GM12878 (cell line): ENCODE measurements at regions of chr9 and their contacts with region 1.

Region 1: DNA sequence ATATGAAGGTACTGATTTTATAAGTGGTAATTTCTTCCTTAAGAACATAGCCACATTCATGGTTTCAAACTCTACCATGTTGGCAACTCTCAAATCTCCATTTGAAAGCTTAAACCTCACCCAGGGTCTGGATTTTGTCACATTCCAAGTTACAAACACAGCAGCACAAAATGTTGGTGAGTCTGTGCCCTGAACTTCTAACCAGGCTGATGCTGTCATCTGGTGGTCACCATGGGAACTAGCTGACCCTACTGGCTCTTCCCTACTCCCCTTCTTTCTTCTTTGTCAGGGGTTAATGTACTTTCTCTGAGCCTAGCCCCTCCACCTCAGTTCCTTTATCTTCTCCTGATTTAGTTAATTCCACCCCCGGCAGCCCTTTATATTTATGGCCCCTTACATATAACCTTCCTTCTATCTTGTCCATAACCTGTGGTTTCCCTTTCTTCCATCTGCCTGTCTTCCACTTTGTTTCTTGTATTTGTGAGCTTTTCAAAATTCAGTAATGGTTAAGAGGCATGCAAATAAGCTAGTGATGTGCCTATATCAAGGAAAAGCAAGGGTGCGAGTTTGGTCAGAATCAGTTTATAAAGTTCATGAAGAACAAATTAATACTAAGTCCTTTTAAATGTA is 35.9 kb downstream of the TGFBR1 start:
- DNase-seq: no peak
- ATAC-seq: peak; percentile 91
- H3K4me3 ChIP-seq: no peak overlapping the region
- H3K27ac ChIP-seq: no peak overlapping the region
- H3K4me1 ChIP-seq: peaks cover 5% of the 10 kb centered on the region
- H3K27me3 ChIP-seq: no peaks in the 10 kb centered on the region
- CTCF ChIP-seq: peak; percentile 97 to 98 (median 97)
- EP300 ChIP-seq: no peak
- POLR2A ChIP-seq: no peak
- RAD21 ChIP-seq: peak; percentile 98

Region 2: DNA sequence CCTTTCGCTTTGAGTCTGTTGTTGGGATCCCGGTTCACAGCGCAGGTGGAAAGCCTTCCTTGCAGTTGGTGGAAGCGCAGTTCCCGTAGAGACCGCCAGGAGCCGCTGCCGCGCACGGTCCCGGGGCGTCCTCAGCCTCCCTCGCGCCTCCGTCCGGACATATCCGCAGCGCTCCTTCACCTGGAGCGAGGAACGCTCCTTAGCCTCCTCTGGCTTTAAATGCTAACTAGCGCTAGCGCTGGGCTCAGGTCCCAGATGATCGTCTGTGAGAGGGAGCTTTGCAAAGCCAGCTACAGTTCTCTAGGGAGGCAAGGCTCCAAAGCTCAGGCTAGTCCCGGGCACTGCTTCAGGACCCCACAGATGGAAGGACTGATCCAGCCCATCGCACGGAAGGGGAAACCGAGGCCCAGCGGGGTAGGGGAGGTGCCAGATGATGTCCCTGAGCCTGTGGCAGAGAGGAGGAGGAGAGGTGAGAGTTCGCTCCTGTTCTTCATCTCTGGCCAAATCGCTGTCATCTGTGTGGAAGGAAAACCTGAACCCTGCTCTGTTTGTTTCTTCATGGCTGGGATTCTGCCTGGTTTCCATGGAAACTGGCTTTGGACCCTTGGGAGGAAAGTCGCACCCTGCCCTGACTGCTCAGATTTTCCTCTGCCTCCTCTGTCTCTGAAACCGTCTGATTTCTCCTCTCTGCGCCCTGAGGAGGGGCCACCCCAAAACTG is 165.6 kb before region 1 on chr9:
- CTCF ChIA-PET with region 1: interaction called, 123 read pairs
- POLR2A ChIA-PET with region 1: no interaction called
- RAD21 ChIA-PET with region 1: interaction called, 4 read pairs
- SMC1A ChIA-PET with region 1: interaction called, 15 read pairs
- in situ Hi-C with region 1: no loop called
- intact Hi-C with region 1: loop called (anchors 1 kb)
- DNase-seq: no peak
- ATAC-seq: peak; percentile 97
- H3K4me3 ChIP-seq: no peak overlapping the region
- H3K27ac ChIP-seq: no peak overlapping the region
- H3K4me1 ChIP-seq: no peaks in the 10 kb centered on the region; the same call in 1 of the 2 replicates
- H3K27me3 ChIP-seq: peaks cover 7% of the 10 kb centered on the region in 2 experiments
- CTCF ChIP-seq: peak; percentile 98 to 99 (median 98); a peak in 5 of 6 replicates
- EP300 ChIP-seq: no peak
- POLR2A ChIP-seq: no peak
- RAD21 ChIP-seq: peak; percentile 78

Region 3: GRCh38 chr9:99004717-99005460 is 135.9 kb before region 1 on chr9:
- CTCF ChIA-PET with region 1: interaction called, 304 read pairs
- POLR2A ChIA-PET with region 1: no interaction called
- RAD21 ChIA-PET with region 1: interaction called, 17 read pairs
- SMC1A ChIA-PET with region 1: interaction called, 110 read pairs
- in situ Hi-C with region 1: no loop called
- intact Hi-C with region 1: loop called (anchors 1 kb)
- DNase-seq: no peak
- ATAC-seq: no peak
- H3K4me3 ChIP-seq: no peak overlapping the region
- H3K27ac ChIP-seq: no peak overlapping the region
- H3K4me1 ChIP-seq: no peaks in the 10 kb centered on the region
- H3K27me3 ChIP-seq: no peaks in the 10 kb centered on the region; a peak in 1 of 4 replicates
- CTCF ChIP-seq: no peak
- EP300 ChIP-seq: no peak
- POLR2A ChIP-seq: no peak
- RAD21 ChIP-seq: no peak

Region 4: DNA sequence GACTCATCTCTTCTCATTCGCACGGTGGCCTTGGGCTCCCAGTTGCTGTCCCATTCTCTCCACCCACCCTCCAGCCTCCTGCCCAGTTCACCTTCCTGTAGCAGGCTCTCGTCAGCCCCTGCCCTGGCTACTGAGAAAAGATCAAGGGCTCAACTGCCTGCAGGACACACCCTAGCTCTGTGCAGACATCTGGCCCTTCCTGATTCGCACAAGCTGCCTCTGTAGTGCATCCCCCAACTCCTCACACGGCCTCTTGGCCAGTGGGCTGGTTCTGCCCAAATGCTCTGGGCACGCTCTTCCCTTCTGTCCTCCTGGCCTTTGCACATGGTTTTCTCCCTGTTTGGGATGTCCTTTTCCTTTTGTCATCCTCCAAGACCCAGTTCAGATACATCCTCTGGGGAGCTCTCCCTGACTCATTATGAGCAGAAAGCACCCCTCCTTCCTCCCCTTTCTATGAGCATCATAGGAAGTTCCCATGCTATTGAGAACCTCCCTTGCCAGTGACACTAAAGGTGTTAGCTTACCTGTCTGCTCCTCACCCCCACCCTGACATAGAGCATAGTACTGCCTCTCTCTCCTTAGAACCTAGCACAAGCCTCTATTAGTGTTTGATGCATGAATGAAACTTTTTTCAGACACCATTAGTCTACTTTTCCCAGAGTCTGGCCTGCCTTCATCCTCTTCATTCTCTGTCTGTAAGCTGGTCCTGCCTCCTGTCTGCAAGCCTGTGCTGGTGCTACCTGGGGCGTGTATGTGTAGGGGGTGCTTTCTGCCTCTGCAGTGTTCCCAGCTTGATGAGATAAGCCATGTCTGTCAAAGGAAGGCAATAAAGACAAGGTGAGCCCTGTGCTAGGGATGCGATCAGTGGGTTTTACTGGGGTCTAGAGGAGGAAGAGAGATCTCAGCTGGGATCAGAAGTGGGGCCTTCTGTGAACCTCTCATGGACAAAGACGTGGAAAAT is 114.2 kb before region 1 on chr9:
- CTCF ChIA-PET with region 1: interaction called, 4 read pairs
- POLR2A ChIA-PET with region 1: no interaction called
- RAD21 ChIA-PET with region 1: no interaction called
- SMC1A ChIA-PET with region 1: interaction called, 10 read pairs
- in situ Hi-C with region 1: no loop called
- intact Hi-C with region 1: no loop called
- DNase-seq: no peak
- ATAC-seq: no peak
- H3K4me3 ChIP-seq: no peak overlapping the region
- H3K27ac ChIP-seq: no peak overlapping the region
- H3K4me1 ChIP-seq: no peaks in the 10 kb centered on the region
- H3K27me3 ChIP-seq: peaks cover 0 to 5% of the 10 kb centered on the region in 2 experiments; a peak in 2 of 4 replicates
- CTCF ChIP-seq: no peak
- EP300 ChIP-seq: no peak
- POLR2A ChIP-seq: no peak
- RAD21 ChIP-seq: no peak

Region 5: GRCh38 chr9:99104459-99105151 is 36.2 kb before region 1 on chr9 and contains the start of gene TGFBR1:
- CTCF ChIA-PET with region 1: interaction called, 20 read pairs
- POLR2A ChIA-PET with region 1: interaction called, 8 read pairs
- RAD21 ChIA-PET with region 1: interaction called, 83 read pairs
- SMC1A ChIA-PET with region 1: interaction called, 113 read pairs
- in situ Hi-C with region 1: no loop called
- intact Hi-C with region 1: no loop called
- DNase-seq: peak; percentile 53
- ATAC-seq: peak; percentile 89
- H3K4me3 ChIP-seq: peak within 1 kb of the TSS; percentile 87
- H3K27ac ChIP-seq: peak within 1 kb of the TSS; percentile 67
- H3K4me1 ChIP-seq: peaks cover 8% of the 10 kb centered on the region; the same call in 1 of the 2 replicates
- H3K27me3 ChIP-seq: no peaks in the 10 kb centered on the region
- CTCF ChIP-seq: peak in 1 of 3 experiments; percentile 21; a peak in 1 of 6 replicates
- EP300 ChIP-seq: no peak
- POLR2A ChIP-seq: no peak
- RAD21 ChIP-seq: no peak
- polyA plus RNA-seq, gene TGFBR1: 5.7 to 19.6 TPM

Region 6: GRCh38 chr9:99509900-99510535 is 369.2 kb after region 1 on chr9:
- CTCF ChIA-PET with region 1: no interaction called
- POLR2A ChIA-PET with region 1: no interaction called
- RAD21 ChIA-PET with region 1: no interaction called
- SMC1A ChIA-PET with region 1: no interaction called
- in situ Hi-C with region 1: no loop called
- intact Hi-C with region 1: no loop called
- DNase-seq: peak; percentile 12
- ATAC-seq: no peak; the same call in 2 of the 3 replicates
- H3K4me3 ChIP-seq: no peak overlapping the region
- H3K27ac ChIP-seq: no peak overlapping the region
- H3K4me1 ChIP-seq: peaks cover 15% of the 10 kb centered on the region
- H3K27me3 ChIP-seq: no peaks in the 10 kb centered on the region
- CTCF ChIP-seq: no peak
- EP300 ChIP-seq: peak in 1 of 2 experiments; percentile 11; a peak in 1 of 4 replicates
- POLR2A ChIP-seq: no peak
- RAD21 ChIP-seq: no peak